Kidney (tissue), 22 donors: ENCODE measurements at regions of chr16 and their contacts with region 1.

Region 1: DNA sequence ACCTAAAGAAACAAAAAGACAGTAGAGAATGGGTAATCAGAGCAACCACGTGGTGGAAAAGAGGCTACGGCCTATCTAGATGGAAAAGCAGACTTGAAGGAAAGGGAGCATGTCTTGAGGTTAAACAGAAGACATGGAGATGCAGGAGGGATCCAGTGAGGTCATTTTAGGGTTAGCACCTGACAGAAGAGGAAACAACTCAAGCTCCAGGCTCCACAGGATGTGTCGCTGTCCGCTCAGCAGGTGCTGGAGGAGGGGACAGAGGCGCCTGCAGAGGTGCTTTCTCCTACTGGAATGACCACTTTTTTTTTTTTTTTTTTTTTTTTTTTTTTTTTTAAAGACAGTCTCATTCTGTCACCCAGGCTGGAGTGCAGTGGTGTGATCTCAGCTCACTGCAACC is 47.5 kb upstream of the CLEC3A start:
- DNase-seq: peak in 3 of 5 donors; percentile 46 to 68 (median 60)
- H3K4me3 ChIP-seq: no peak overlapping the region
- H3K27ac ChIP-seq: no peak overlapping the region
- H3K4me1 ChIP-seq: peaks cover 0 to 2% (median 0%) of the 10 kb centered on the region in 3 donors
- H3K27me3 ChIP-seq: no peaks in the 10 kb centered on the region
- CTCF ChIP-seq: no peak

Region 2: GRCh38 chr16:77675464-77676324 is 299.2 kb before region 1 on chr16:
- intact Hi-C with region 1: loop called (anchors 5 kb)
- DNase-seq: peak in 4 of 5 donors; percentile 75 to 90 (median 78)
- H3K4me3 ChIP-seq: no peak overlapping the region
- H3K27ac ChIP-seq: no peak overlapping the region
- H3K4me1 ChIP-seq: no peaks in the 10 kb centered on the region
- H3K27me3 ChIP-seq: no peaks in the 10 kb centered on the region
- CTCF ChIP-seq: peak; percentile 95

Region 3: GRCh38 chr16:77850636-77851333 is 124.1 kb before region 1 on chr16:
- intact Hi-C with region 1: no loop called
- DNase-seq: peak in 1 of 5 donors; percentile 46
- H3K4me3 ChIP-seq: no peak overlapping the region
- H3K27ac ChIP-seq: no peak overlapping the region
- H3K4me1 ChIP-seq: no peaks in the 10 kb centered on the region
- H3K27me3 ChIP-seq: no peaks in the 10 kb centered on the region
- CTCF ChIP-seq: no peak

Region 4: DNA sequence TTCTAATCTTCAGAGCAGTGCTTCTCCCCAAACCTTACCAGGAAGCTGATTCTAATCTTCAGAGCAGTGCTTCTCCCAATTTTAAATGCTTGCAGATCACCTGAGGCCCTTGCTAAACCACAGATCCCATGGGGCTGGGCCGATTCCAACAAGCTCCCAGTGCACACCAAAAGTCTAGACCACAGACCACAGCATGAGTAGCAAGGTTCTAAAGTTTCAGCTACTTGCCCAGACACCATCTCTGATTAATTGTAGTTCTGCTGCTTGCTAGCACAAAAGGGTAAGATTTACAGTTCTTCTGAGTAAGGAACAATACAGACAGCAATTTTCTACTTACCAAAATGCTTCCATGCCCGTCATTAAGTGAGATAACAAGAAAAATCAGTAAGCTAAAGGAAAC is 59.6 kb after region 1 on chr16:
- intact Hi-C with region 1: no loop called
- DNase-seq: no peak
- H3K4me3 ChIP-seq: no peak overlapping the region
- H3K27ac ChIP-seq: no peak overlapping the region
- H3K4me1 ChIP-seq: no peaks in the 10 kb centered on the region
- H3K27me3 ChIP-seq: no peaks in the 10 kb centered on the region
- CTCF ChIP-seq: no peak